ENCODE measurements at regions of chr4 and their contacts with region 1.

Region 1: DNA sequence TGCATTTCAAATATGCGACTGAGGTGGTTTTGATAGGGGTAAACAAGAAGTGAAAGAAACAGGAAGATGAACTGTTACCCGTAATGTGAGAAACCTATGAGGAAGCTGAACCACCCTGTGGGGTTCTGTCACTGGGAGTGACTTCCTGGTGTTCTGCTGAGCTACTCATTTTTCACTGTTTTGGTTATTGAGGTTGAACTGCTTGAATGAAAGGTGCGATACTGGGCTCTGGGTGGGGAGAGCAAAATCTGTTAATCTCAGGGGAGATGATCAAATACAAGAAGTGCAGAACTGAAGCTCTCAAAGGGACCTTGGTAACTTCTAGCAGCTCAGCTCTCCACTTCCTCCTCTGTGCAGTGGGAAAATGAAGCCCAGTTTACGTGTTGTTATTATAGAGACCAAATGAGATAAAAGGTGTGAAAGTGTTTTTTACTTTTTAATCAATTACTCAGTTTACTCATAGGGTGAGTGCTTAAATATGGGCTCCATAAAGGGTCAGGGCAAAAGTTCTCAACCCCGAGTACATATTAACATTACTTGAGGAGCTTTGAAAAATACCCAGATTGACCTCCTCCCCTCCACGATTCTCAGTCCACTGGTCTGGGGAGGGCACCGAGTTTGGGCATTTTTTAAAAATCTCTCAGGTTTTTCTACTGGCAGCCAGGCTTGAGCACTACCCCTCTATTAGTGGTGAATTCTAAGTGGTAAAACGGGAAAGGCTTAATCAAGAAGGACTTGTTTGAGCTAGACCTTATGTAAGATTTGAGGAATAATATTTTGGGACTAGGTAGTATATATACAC is 66.7 kb downstream of the COQ2 start:
- DNase-seq: peak; percentile 82
- H3K4me3 Mint-ChIP-seq: peak overlapping the region; percentile 28
- H3K27ac Mint-ChIP-seq: peak overlapping the region; percentile 92
- H3K4me1 Mint-ChIP-seq: peaks cover 65% of the 10 kb centered on the region
- H3K27me3 Mint-ChIP-seq: no peaks in the 10 kb centered on the region

Region 2: GRCh38 chr4:82284858-82285805 is 932.8 kb before region 1 on chr4:
- CTCF ChIA-PET with region 1: no interaction called
- intact Hi-C with region 1: loop called (anchors 5 kb)
- DNase-seq: peak; percentile 100
- H3K4me3 Mint-ChIP-seq: peak overlapping the region; percentile 73
- H3K27ac Mint-ChIP-seq: no peak overlapping the region
- H3K4me1 Mint-ChIP-seq: peaks cover 12% of the 10 kb centered on the region
- H3K27me3 Mint-ChIP-seq: no peaks in the 10 kb centered on the region

Region 3: GRCh38 chr4:83012687-83013419 is 205.1 kb before region 1 on chr4:
- CTCF ChIA-PET with region 1: no interaction called
- intact Hi-C with region 1: loop called (anchors 1 kb)
- DNase-seq: peak; percentile 98
- H3K4me3 Mint-ChIP-seq: peak overlapping the region; percentile 95
- H3K27ac Mint-ChIP-seq: peak overlapping the region; percentile 87
- H3K4me1 Mint-ChIP-seq: peaks cover 29% of the 10 kb centered on the region
- H3K27me3 Mint-ChIP-seq: no peaks in the 10 kb centered on the region

Region 4: GRCh38 chr4:83067058-83067639 is 150.8 kb before region 1 on chr4:
- CTCF ChIA-PET with region 1: no interaction called
- intact Hi-C with region 1: no loop called
- DNase-seq: no peak
- H3K4me3 Mint-ChIP-seq: no peak overlapping the region
- H3K27ac Mint-ChIP-seq: no peak overlapping the region
- H3K4me1 Mint-ChIP-seq: no peaks in the 10 kb centered on the region
- H3K27me3 Mint-ChIP-seq: no peaks in the 10 kb centered on the region

Region 5: GRCh38 chr4:83150653-83151330 is 67.1 kb before region 1 on chr4:
- CTCF ChIA-PET with region 1: no interaction called
- intact Hi-C with region 1: loop called (anchors 1 kb)
- DNase-seq: no peak
- H3K4me3 Mint-ChIP-seq: no peak overlapping the region
- H3K27ac Mint-ChIP-seq: no peak overlapping the region
- H3K4me1 Mint-ChIP-seq: peaks cover 28% of the 10 kb centered on the region
- H3K27me3 Mint-ChIP-seq: no peaks in the 10 kb centered on the region

Region 6: DNA sequence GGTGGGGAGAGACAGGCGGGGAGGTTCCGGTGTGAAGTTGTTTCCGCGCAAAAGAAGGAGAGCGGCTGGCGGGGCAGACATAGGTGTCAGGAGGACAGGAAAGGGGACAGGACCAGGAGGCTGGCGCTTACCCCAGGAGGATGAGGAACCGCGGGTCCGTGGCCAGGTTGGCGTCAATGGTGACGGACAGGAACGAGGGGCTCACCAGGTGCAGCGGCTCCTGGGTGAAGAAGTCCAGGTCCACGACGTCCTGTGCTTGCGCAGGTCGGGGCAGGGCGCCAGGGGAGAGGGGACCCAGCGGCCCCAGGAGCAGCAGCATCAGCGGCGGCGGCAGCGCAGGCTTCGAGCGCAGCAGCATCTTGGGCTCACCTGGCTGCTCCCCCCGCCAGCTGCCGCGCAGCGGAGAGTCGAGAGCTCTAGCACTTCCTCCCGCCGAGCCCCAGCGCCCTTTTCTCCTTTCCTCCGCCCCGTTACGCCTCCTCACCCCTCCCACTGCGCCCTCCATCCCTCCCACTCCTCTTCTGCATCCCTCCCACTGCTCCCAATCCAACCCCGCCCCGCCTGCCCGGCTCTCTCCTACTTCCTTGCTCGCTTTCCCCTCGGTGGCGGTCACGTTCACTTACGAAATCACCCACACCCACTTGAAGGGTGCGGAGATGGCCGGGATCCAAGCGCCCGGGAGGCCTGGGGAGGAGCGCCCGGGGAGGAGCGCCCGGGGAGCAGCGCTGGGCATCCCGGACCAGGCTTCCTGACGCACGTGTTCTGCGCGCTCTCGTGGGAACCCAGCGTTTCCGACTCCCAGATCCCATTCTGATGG is 116.7 kb after region 1 on chr4 and contains the start of gene HPSE:
- CTCF ChIA-PET with region 1: no interaction called
- intact Hi-C with region 1: loop called (anchors 2 kb)
- DNase-seq: peak; percentile 81
- H3K4me3 Mint-ChIP-seq: peak within 1 kb of the TSS; percentile 84
- H3K27ac Mint-ChIP-seq: peak within 1 kb of the TSS; percentile 51
- H3K4me1 Mint-ChIP-seq: peaks cover 16% of the 10 kb centered on the region
- H3K27me3 Mint-ChIP-seq: peaks cover under 1% of the 10 kb centered on the region
- total RNA-seq, gene HPSE: 13.5 to 16.1 TPM

Region 7: GRCh38 chr4:83535520-83536361 is 317.8 kb after region 1 on chr4 and contains the start of gene GPAT3:
- CTCF ChIA-PET with region 1: no interaction called
- intact Hi-C with region 1: loop called (anchors 5 kb)
- DNase-seq: peak; percentile 83
- H3K4me3 Mint-ChIP-seq: peak within 1 kb of the TSS; percentile 73
- H3K27ac Mint-ChIP-seq: peak within 1 kb of the TSS; percentile 15
- H3K4me1 Mint-ChIP-seq: peaks cover 14% of the 10 kb centered on the region
- H3K27me3 Mint-ChIP-seq: peaks cover 2% of the 10 kb centered on the region
- total RNA-seq, gene GPAT3: 2.0 to 3.1 TPM

Measured in activated naive CD4-positive, alpha-beta T cell treated with anti-CD3 and anti-CD28 coated beads for 36 hours (primary cell).